ENCODE measurements at regions of chr16 and their contacts with region 1.

Region 1: GRCh38 chr16:1054660-1055556 is 17.6 kb upstream of the SSTR5 start:
- DNase-seq: peak; percentile 88
- ATAC-seq: peak; percentile 87
- H3K4me3 Mint-ChIP-seq: no peak overlapping the region
- H3K27ac Mint-ChIP-seq: no peak overlapping the region
- H3K4me1 Mint-ChIP-seq: no peaks in the 10 kb centered on the region
- H3K27me3 Mint-ChIP-seq: peaks cover 5% of the 10 kb centered on the region
- CTCF ChIP-seq: peak; percentile 73

Region 2: DNA sequence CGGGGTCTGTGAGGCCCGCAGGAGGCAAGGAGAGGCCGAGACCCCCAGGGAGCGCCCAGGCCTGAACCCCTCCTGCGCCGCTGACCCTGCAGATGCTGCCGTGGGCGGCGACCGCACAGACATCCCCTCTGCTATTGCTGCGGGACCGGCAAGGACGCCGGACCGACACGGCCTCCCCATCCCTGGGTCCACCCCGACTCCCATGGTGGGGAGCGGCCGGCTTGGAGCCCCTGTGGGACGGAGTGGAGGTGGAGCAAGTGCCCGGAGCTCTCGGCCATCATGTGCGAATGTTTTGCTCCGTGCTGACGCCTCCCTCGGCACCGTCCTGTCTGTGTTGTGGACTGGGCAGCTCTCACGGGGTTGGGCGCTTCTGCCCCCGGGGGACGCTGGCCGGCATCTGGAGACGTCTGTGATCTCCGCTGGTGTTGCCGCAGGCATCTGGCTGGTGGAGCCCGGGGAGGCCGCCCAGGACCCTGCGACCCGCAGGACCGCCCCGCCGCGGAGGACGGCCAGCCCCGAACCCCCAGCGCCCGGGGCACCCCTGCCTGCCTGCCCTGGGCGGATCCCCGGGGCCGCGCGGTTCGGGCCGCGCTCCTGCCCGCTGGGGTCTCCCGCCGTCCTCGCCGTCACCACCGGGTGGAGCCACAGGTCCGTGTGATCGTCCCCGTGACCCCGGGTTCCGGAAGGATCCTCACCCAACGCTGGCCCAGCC is 241.5 kb before region 1 on chr16:
- CTCF ChIA-PET with region 1: interaction called, 33 read pairs
- POLR2A ChIA-PET with region 1: no interaction called
- DNase-seq: peak; percentile 80
- ATAC-seq: peak; percentile 91
- H3K4me3 Mint-ChIP-seq: peak overlapping the region; percentile 54
- H3K27ac Mint-ChIP-seq: no peak overlapping the region
- H3K4me1 Mint-ChIP-seq: peaks cover 8% of the 10 kb centered on the region
- H3K27me3 Mint-ChIP-seq: peaks cover 13% of the 10 kb centered on the region
- CTCF ChIP-seq: peak; percentile 50; the same call in 1 of the 2 replicates

Region 3: GRCh38 chr16:893360-893759 is 161.5 kb before region 1 on chr16:
- CTCF ChIA-PET with region 1: interaction called, 11 read pairs
- POLR2A ChIA-PET with region 1: no interaction called
- DNase-seq: no peak
- ATAC-seq: no peak
- H3K4me3 Mint-ChIP-seq: no peak overlapping the region
- H3K27ac Mint-ChIP-seq: no peak overlapping the region; the same call in 1 of the 2 replicates
- H3K4me1 Mint-ChIP-seq: no peaks in the 10 kb centered on the region
- H3K27me3 Mint-ChIP-seq: no peaks in the 10 kb centered on the region
- CTCF ChIP-seq: no peak

Region 4: GRCh38 chr16:947255-947921 is 107.5 kb before region 1 on chr16:
- CTCF ChIA-PET with region 1: no interaction called
- POLR2A ChIA-PET with region 1: no interaction called
- DNase-seq: no peak
- ATAC-seq: no peak
- H3K4me3 Mint-ChIP-seq: no peak overlapping the region
- H3K27ac Mint-ChIP-seq: 0 out of 2 replicates have a peak overlapping the region, but pooled peaks have one; percentile 76
- H3K4me1 Mint-ChIP-seq: no peaks in the 10 kb centered on the region
- H3K27me3 Mint-ChIP-seq: no peaks in the 10 kb centered on the region
- CTCF ChIP-seq: no peak

Region 5: GRCh38 chr16:982145-983043 is 72.5 kb before region 1 on chr16:
- CTCF ChIA-PET with region 1: interaction called, 27 read pairs
- POLR2A ChIA-PET with region 1: no interaction called
- DNase-seq: peak; percentile 42
- ATAC-seq: no peak
- H3K4me3 Mint-ChIP-seq: peak overlapping the region; percentile 69
- H3K27ac Mint-ChIP-seq: no peak overlapping the region
- H3K4me1 Mint-ChIP-seq: peaks cover 5% of the 10 kb centered on the region
- H3K27me3 Mint-ChIP-seq: peaks cover 29% of the 10 kb centered on the region
- CTCF ChIP-seq: no peak

Region 6: GRCh38 chr16:1073566-1074378 is 18.9 kb after region 1 on chr16:
- CTCF ChIA-PET with region 1: interaction called, 97 read pairs
- POLR2A ChIA-PET with region 1: no interaction called
- DNase-seq: peak; percentile 52
- ATAC-seq: peak; percentile 52
- H3K4me3 Mint-ChIP-seq: 0 out of 2 replicates have a peak overlapping the region, but pooled peaks have one; percentile 14
- H3K27ac Mint-ChIP-seq: no peak overlapping the region
- H3K4me1 Mint-ChIP-seq: peaks cover 7% of the 10 kb centered on the region
- H3K27me3 Mint-ChIP-seq: peaks cover 6% of the 10 kb centered on the region; the same call in 1 of the 2 replicates
- CTCF ChIP-seq: peak; percentile 30; the same call in 1 of the 2 replicates

Region 7: GRCh38 chr16:1208239-1208830 is 153.4 kb after region 1 on chr16:
- CTCF ChIA-PET with region 1: no interaction called
- POLR2A ChIA-PET with region 1: no interaction called
- DNase-seq: no peak
- ATAC-seq: no peak
- H3K4me3 Mint-ChIP-seq: no peak overlapping the region
- H3K27ac Mint-ChIP-seq: no peak overlapping the region
- H3K4me1 Mint-ChIP-seq: no peaks in the 10 kb centered on the region
- H3K27me3 Mint-ChIP-seq: no peaks in the 10 kb centered on the region
- CTCF ChIP-seq: no peak

Measured in WTC11 (cell line).